ENCODE measurements at regions of chr12 and their contacts with region 1.

Region 1: GRCh38 chr12:15532364-15532977 is 210.2 kb downstream of the PTPRO start:
- DNase-seq: peak; percentile 61
- ATAC-seq: peak; percentile 77
- H3K4me3 Mint-ChIP-seq: no peak overlapping the region
- H3K27ac Mint-ChIP-seq: no peak overlapping the region
- H3K4me1 Mint-ChIP-seq: peaks cover 8% of the 10 kb centered on the region
- H3K27me3 Mint-ChIP-seq: no peaks in the 10 kb centered on the region
- CTCF ChIP-seq: peak; percentile 86

Region 2: DNA sequence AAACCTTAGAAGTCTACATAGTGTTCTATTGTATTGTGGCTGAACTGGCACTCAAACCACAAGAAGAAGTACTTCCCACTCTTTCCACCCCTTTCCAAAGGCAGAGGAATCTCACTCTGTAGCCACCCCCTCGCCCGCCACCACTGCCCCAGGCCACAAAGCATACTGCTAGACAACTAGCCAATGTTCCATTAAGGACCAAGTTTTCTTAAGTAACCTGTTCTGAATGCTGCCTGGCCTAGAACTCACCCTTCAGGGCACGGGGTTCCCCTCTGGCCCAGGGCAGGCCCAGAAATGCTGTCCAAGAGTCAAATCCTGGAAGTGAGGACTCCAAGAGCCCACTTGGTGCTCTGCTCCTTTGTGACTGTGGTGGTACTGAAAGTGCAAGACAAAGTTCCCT is 225.9 kb before region 1 on chr12:
- CTCF ChIA-PET with region 1: no interaction called
- POLR2A ChIA-PET with region 1: no interaction called
- intact Hi-C with region 1: no loop called
- DNase-seq: no peak
- ATAC-seq: no peak
- H3K4me3 Mint-ChIP-seq: no peak overlapping the region
- H3K27ac Mint-ChIP-seq: no peak overlapping the region
- H3K4me1 Mint-ChIP-seq: no peaks in the 10 kb centered on the region
- H3K27me3 Mint-ChIP-seq: no peaks in the 10 kb centered on the region
- CTCF ChIP-seq: no peak

Region 3: DNA sequence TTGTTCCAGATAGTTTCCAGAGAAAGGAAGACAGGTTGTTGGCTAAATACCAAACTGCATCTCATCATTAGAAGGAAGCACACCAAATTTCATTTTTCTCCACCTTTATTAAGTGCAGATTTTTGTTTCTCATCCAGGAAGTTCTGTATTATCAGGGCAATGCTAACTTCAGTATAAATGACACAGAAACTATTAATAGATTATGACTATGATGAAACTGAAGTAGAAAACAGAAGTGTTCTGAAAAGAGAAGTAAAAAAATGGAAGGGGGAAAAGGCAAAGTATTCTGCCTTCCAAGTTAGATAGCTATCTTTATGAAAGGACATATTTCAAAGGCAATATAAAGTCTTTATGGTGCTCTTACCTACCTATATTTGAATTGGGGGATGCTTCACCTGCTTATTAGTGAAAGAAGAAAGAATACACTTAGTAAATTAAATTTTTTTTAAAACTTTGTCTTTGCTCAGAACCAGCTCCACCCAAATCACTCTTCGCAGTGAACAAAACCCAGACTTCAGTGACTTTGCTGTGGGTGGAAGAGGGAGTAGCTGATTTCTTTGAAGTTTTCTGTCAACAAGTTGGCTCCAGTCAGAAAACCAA is 13.7 kb after region 1 on chr12:
- CTCF ChIA-PET with region 1: interaction called, 15 read pairs
- POLR2A ChIA-PET with region 1: interaction called, 8 read pairs
- intact Hi-C with region 1: no loop called
- DNase-seq: peak; percentile 17
- ATAC-seq: peak; percentile 62
- H3K4me3 Mint-ChIP-seq: peak overlapping the region; percentile 20
- H3K27ac Mint-ChIP-seq: peak overlapping the region; percentile 86
- H3K4me1 Mint-ChIP-seq: peaks cover 35% of the 10 kb centered on the region
- H3K27me3 Mint-ChIP-seq: no peaks in the 10 kb centered on the region
- CTCF ChIP-seq: no peak

Region 4: GRCh38 chr12:15575671-15576541 is 43.4 kb after region 1 on chr12:
- CTCF ChIA-PET with region 1: interaction called, 38 read pairs
- POLR2A ChIA-PET with region 1: interaction called, 3 read pairs
- intact Hi-C with region 1: loop called (anchors 1 kb)
- DNase-seq: no peak
- ATAC-seq: peak; percentile 25
- H3K4me3 Mint-ChIP-seq: no peak overlapping the region
- H3K27ac Mint-ChIP-seq: peak overlapping the region; percentile 82
- H3K4me1 Mint-ChIP-seq: peaks cover 53% of the 10 kb centered on the region
- H3K27me3 Mint-ChIP-seq: no peaks in the 10 kb centered on the region
- CTCF ChIP-seq: no peak

Region 5: DNA sequence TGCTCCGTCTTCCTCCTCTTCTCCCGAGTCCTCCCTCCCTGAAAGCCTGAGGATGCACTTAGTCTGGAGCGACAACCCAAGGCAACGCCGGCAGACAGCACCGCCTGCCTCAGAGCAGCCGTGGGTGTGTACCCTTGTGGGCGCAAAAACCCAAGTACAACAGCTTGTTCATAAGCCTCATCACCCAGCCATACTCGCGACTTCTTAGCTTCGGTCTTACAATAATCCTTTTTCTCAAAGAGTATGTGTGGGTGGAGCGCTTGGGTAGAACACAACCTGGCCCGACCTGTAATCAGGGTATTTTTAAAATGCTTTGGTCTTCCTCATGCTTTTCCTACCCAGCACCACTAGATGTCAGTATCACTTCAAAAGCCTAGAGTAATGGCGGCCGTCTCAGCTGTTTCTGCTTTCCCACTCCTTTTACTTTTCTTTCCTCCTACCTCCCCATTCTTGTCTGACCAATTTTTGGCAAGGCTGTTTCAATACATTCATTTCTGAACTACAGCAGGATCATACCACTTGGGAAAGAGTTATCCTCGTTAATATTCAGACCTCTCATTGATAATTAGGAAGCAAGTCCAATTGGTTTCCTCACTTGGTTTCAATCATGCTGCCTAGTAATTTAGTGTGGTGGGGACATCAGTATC is 57.8 kb after region 1 on chr12:
- CTCF ChIA-PET with region 1: interaction called, 510 read pairs
- POLR2A ChIA-PET with region 1: interaction called, 4 read pairs
- intact Hi-C with region 1: no loop called
- DNase-seq: peak; percentile 56
- ATAC-seq: peak; percentile 98
- H3K4me3 Mint-ChIP-seq: peak overlapping the region; percentile 72
- H3K27ac Mint-ChIP-seq: peak overlapping the region; percentile 75
- H3K4me1 Mint-ChIP-seq: peaks cover 10% of the 10 kb centered on the region
- H3K27me3 Mint-ChIP-seq: no peaks in the 10 kb centered on the region
- CTCF ChIP-seq: peak; percentile 79

Region 6: DNA sequence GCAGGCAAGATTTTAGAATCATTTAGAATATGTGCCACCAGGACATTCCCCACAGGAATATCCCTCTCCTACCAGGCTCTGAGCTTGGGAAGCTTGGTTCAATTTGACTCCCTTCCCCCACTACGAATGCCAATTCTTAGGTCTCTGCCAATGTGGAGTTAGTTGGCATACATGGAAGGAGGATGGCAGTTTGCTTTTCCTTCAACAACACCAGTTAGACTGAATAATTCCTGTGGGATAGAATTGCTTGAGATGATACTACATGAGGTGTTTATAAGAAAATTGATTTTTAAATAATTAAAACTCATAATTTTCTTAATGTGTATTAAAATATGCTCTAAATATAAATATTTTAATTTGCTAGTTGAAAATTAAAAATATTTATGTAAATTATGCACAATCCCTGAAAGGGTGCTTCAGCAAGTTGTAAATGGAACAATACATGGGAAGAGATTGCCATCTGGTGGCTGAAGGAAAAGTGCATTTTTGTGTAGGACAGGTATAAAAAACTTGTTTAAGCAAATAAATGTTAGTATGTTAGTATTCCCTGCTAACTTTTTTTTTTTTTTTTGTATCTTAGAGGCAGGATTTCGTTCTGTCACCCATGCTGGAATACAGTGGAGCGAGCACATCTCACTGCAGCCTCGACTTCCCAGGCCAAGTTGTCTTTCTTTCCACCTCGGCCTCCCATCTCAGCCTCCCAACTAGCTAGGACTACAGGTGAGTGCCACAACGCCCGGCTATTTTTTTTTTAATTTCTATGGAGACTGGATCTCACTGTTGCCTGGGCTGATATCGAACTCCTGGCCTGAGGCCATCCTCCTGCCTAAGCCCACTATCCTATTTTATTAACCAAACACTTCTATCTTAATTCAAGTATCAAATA is 323.9 kb after region 1 on chr12:
- CTCF ChIA-PET with region 1: interaction called, 43 read pairs
- POLR2A ChIA-PET with region 1: no interaction called
- intact Hi-C with region 1: loop called (anchors 5 kb)
- DNase-seq: peak; percentile 61
- ATAC-seq: peak; percentile 45
- H3K4me3 Mint-ChIP-seq: no peak overlapping the region
- H3K27ac Mint-ChIP-seq: no peak overlapping the region
- H3K4me1 Mint-ChIP-seq: no peaks in the 10 kb centered on the region
- H3K27me3 Mint-ChIP-seq: peaks cover 18% of the 10 kb centered on the region
- CTCF ChIP-seq: peak; percentile 78